ENCODE measurements at regions of chr1 and their contacts with region 1.

Region 1: GRCh38 chr1:91404151-91405012 is at the start of gene HFM1:
- DNase-seq: peak; percentile 49 to 58
- H3K4me3 ChIP-seq: peak within 1 kb of the TSS; percentile 50
- H3K4me3 Mint-ChIP-seq: peak within 1 kb of the TSS; percentile 67
- H3K27ac Mint-ChIP-seq: no peak within 1 kb of the TSS
- H3K4me1 ChIP-seq: no peaks in the 10 kb centered on the region
- H3K4me1 Mint-ChIP-seq: no peaks in the 10 kb centered on the region
- H3K27me3 ChIP-seq: no peaks in the 10 kb centered on the region; the same call in 1 of the 2 replicates
- H3K27me3 Mint-ChIP-seq: peaks cover 6% of the 10 kb centered on the region
- CTCF ChIP-seq: no peak
- total RNA-seq, gene HFM1: 0.26 and 0.48 TPM in 2 replicates

Region 2: GRCh38 chr1:91500756-91501522 is 96.6 kb after region 1 on chr1 and contains the start of gene CDC7:
- CTCF ChIA-PET with region 1: no interaction called
- POLR2A ChIA-PET with region 1: no interaction called
- intact Hi-C with region 1: loop called (anchors 5 kb)
- DNase-seq: peak; percentile 90 to 92
- H3K4me3 ChIP-seq: peak within 1 kb of the TSS; percentile 54
- H3K4me3 Mint-ChIP-seq: no peak within 1 kb of the TSS
- H3K27ac Mint-ChIP-seq: no peak within 1 kb of the TSS
- H3K4me1 ChIP-seq: peaks cover 11% of the 10 kb centered on the region
- H3K4me1 Mint-ChIP-seq: peaks cover 18% of the 10 kb centered on the region
- H3K27me3 ChIP-seq: no peaks in the 10 kb centered on the region
- H3K27me3 Mint-ChIP-seq: no peaks in the 10 kb centered on the region
- CTCF ChIP-seq: peak; percentile 38 to 64
- total RNA-seq, gene CDC7: 17.6 and 19.4 TPM in 2 replicates